ENCODE measurements at regions of chr11 and their contacts with region 1.

Region 1: DNA sequence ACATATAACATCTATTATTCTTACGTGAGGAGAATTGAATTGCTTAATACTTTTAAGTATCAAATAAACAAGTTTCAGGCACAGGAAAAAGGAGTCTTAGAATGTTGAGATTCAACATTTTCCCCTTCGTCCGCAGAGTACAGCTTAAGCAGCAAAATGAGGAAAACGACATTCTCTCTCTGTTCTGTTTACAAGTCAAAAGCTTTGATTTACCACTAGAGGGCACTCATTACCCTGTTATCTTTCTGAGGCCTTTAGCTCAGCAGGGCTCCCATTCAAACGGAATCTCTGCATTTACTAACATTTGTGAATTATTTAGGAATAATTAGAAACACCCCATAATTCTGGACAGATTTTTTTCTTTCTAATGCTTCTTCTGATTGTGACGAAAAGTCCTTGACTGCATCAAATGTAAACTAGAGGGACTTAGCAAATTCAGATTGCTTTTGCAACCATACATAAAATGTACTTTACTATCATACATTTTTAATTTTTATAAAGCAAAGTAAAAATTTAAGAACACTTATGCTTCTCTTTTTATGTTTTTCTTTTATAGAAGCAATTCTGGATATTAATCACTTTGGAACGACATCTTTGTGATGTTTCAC is 75.0 kb downstream of the JRKL start:
- DNase-seq: no peak
- ATAC-seq: peak; percentile 81
- H3K4me3 Mint-ChIP-seq: no peak overlapping the region
- H3K27ac Mint-ChIP-seq: no peak overlapping the region
- H3K4me1 Mint-ChIP-seq: no peaks in the 10 kb centered on the region
- H3K27me3 Mint-ChIP-seq: peaks cover 1% of the 10 kb centered on the region
- CTCF ChIP-seq: peak; percentile 75

Region 2: GRCh38 chr11:96168623-96169022 is 296.2 kb before region 1 on chr11:
- CTCF ChIA-PET with region 1: no interaction called
- POLR2A ChIA-PET with region 1: no interaction called
- intact Hi-C with region 1: no loop called
- DNase-seq: peak; percentile 46
- ATAC-seq: peak; percentile 79
- H3K4me3 Mint-ChIP-seq: no peak overlapping the region
- H3K27ac Mint-ChIP-seq: peak overlapping the region; percentile 76
- H3K4me1 Mint-ChIP-seq: peaks cover 64% of the 10 kb centered on the region
- H3K27me3 Mint-ChIP-seq: no peaks in the 10 kb centered on the region
- CTCF ChIP-seq: no peak

Region 3: DNA sequence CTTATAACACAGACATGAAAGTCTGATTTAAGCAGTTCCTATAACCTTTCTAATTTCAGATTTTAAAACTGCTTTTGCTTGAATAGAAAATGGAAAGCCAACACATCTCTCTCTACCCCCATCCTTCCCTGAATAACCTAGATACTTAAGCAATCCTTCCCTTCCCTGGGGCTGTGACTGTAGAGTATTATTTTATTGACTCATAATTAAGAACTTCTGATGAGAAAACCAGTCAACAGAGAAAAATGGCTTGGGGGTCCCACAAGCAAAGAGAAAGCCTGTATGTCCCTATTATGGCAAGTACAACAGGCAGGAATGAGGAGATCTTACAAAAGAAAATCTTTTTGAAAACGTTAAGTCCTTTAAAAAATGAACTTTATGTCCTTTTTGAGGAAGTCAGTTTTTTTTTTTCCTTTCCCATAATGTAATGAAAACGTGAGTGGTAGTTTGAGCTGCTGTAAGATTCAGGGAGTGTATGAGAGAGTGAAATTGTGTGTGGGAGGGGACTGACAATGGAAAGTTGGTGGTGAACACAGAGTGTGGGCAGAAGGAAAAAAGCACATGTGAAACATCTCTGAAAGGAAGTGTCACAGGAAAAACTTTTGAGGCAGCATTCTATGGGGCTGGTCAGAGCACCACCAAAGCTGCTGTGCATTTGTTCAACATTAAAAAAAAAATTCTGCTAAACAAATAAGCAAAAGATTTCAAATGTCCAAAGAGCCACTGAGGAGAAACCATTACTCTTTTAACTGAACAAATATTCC is 276.4 kb before region 1 on chr11:
- CTCF ChIA-PET with region 1: no interaction called
- POLR2A ChIA-PET with region 1: no interaction called
- intact Hi-C with region 1: no loop called
- DNase-seq: peak; percentile 58
- ATAC-seq: peak; percentile 60
- H3K4me3 Mint-ChIP-seq: peak overlapping the region; percentile 43
- H3K27ac Mint-ChIP-seq: peak overlapping the region; percentile 86
- H3K4me1 Mint-ChIP-seq: peaks cover 81% of the 10 kb centered on the region
- H3K27me3 Mint-ChIP-seq: no peaks in the 10 kb centered on the region
- CTCF ChIP-seq: no peak

Region 4: DNA sequence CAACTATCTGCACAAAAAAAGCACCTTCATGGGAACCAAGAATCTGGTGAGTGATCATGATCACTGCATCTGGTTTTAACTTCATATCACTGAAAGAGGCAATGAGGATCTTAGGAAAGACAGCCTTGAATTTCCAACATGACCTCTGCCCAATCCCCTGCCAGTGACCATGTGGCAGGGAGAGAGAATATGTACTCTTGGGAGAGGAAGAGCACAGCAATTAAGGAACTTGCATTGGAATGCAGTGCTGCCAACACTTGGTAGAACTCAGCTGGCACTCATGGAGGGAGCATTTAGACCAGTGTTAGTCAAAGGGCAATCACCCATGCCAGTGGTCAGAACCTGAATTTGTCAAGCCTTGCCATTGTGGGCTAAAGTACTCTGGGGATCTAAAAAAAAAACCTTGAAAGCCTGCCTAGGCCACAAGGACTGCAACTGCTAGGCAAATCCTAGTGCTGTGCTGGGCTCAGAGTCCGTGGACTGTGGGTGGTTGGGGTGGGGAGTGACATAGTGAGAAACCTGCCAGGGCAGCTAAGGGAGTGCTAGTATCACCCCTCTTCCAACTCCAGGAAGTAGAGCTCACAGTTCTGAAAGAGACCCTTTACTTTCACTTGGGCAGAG is 51.9 kb before region 1 on chr11:
- CTCF ChIA-PET with region 1: no interaction called
- POLR2A ChIA-PET with region 1: no interaction called
- intact Hi-C with region 1: no loop called
- DNase-seq: no peak
- ATAC-seq: no peak
- H3K4me3 Mint-ChIP-seq: no peak overlapping the region
- H3K27ac Mint-ChIP-seq: no peak overlapping the region
- H3K4me1 Mint-ChIP-seq: peaks cover 6% of the 10 kb centered on the region
- H3K27me3 Mint-ChIP-seq: peaks cover 17% of the 10 kb centered on the region
- CTCF ChIP-seq: no peak

Region 5: DNA sequence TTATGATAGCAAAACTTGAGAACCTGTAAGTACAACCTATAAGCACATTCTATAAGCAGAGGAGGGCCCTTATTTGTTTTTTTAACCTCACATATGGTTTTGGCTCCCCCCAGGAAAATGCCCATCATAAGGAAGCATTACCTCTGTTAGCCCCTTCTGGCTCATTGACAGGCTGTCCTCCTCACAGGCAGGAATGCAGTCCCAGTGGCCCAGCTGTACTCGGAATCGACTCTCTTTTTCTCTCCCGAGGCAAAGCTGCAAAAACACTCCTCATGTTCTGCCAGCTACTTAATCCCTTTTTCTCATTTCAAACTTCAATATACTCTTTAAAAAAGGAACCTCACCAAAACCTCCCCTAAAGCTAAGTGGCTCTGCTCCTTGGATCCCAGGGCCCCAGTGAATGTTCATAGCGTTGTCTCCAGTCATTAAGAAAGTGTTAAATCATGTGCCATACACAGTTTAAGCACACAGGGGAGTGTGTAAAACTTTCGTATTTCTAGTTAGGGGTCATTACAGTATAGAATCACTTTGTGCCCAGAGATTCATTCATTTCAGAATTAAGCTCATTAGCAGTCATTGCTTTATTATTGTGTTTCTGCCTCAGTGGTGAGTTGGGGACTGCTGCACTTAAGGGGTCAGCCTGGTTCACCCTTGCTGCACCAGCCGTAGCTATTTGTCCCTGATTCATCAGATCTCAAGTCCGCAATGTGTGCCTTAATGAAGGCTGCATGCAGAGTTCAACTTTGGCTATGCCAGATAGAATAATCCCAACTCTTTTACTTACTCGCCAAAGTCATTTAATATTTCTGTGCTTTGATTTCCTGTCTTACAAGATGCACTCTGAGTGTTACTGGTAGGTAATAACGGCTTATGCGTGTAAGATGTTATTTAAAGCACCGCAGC is 17.3 kb before region 1 on chr11:
- CTCF ChIA-PET with region 1: interaction called, 35 read pairs
- POLR2A ChIA-PET with region 1: no interaction called
- intact Hi-C with region 1: no loop called
- DNase-seq: no peak
- ATAC-seq: no peak
- H3K4me3 Mint-ChIP-seq: no peak overlapping the region
- H3K27ac Mint-ChIP-seq: no peak overlapping the region
- H3K4me1 Mint-ChIP-seq: no peaks in the 10 kb centered on the region
- H3K27me3 Mint-ChIP-seq: peaks cover 13% of the 10 kb centered on the region
- CTCF ChIP-seq: no peak

Region 6: DNA sequence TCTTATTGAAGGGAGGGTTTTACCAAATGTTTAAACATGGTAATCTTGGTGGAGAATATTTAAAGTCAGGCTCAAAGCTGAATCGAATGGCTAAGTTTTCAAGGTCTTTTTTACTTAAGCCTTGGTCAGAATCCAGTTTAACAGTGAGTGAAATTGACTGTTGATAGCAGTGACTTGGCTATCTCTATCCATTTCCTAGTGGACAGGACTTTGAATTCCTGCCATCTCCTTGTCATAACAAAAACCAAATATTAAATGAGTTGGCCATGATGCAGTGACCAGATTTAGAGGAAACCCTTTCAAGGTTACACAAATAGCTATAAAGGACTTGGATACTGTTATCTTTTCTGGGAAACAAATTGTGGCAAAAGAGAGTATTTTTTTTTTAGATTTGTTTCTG is 17.0 kb after region 1 on chr11:
- CTCF ChIA-PET with region 1: interaction called, 51 read pairs
- POLR2A ChIA-PET with region 1: no interaction called
- intact Hi-C with region 1: no loop called
- DNase-seq: no peak
- ATAC-seq: no peak
- H3K4me3 Mint-ChIP-seq: no peak overlapping the region
- H3K27ac Mint-ChIP-seq: no peak overlapping the region
- H3K4me1 Mint-ChIP-seq: no peaks in the 10 kb centered on the region
- H3K27me3 Mint-ChIP-seq: peaks cover 10% of the 10 kb centered on the region
- CTCF ChIP-seq: no peak

Region 7: GRCh38 chr11:96506953-96507354 is 42.1 kb after region 1 on chr11:
- CTCF ChIA-PET with region 1: no interaction called
- POLR2A ChIA-PET with region 1: no interaction called
- intact Hi-C with region 1: no loop called
- DNase-seq: no peak
- ATAC-seq: no peak
- H3K4me3 Mint-ChIP-seq: no peak overlapping the region
- H3K27ac Mint-ChIP-seq: no peak overlapping the region
- H3K4me1 Mint-ChIP-seq: no peaks in the 10 kb centered on the region
- H3K27me3 Mint-ChIP-seq: no peaks in the 10 kb centered on the region
- CTCF ChIP-seq: no peak

Region 8: DNA sequence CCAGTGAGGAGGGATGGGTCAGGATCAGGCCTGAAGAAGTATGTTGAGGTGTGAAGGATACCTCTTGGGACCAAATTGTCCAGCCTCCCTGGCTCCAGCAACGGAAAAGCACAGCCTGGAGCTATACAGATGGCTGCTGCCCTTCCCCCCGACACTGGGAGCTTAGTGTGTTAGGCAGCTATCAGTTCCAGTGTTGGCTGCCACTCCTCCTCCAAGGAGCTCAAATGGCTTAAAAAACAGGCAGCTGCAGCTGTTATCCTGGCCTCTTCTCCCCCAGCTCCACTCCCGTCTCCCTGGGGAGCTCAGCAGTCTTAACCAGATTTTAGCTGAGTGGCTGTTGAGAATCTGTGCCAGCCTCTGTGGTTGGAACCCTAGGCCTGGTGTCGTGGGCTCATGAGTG is 150.0 kb after region 1 on chr11:
- CTCF ChIA-PET with region 1: no interaction called
- POLR2A ChIA-PET with region 1: no interaction called
- intact Hi-C with region 1: loop called (anchors 10 kb)
- DNase-seq: no peak
- ATAC-seq: no peak
- H3K4me3 Mint-ChIP-seq: no peak overlapping the region
- H3K27ac Mint-ChIP-seq: no peak overlapping the region
- H3K4me1 Mint-ChIP-seq: no peaks in the 10 kb centered on the region
- H3K27me3 Mint-ChIP-seq: no peaks in the 10 kb centered on the region
- CTCF ChIP-seq: no peak